ENCODE measurements at regions of chr2 and their contacts with region 1.

Region 1: DNA sequence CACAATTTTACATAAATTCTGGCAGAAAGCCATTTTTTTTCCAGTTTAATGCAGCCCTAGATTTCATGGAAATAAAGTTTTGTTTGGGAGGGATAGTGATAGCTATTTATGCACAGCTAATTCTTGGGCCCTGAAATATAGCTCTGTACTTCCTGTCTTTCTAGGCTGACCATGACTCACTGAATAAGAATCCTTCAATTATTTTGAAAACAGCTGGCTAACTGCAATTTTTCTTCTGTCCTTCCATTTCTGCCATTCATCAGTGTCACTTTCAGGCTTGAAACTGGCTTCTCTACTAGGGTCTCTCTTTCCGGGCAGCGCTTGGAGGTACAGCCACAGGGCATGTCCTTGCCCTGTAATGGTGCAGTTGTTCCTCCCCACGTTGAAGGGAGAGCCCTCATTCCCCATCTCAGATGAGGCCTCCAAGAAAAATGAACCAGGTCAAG is 97.1 kb upstream of the TMEM178A start:
- DNase-seq: no peak
- ATAC-seq: peak; percentile 62

Region 2: DNA sequence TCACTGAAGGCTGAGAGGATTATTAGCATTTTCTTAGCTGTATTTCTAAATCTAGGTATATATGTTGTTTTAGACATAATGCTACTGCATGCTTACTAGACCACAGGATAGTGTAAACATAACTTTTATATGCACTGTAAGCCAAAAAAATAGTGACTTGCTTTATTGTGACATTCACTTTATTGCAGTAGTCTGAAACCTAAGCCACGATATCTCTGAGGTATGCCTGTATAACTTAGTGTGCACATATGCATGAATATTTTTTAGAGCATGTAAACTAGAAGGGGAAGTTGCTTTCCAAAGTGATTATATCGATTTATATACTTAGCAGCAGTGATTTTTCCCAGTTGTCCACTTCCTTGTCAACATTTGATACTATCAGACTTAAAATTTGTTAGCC is 529.5 kb before region 1 on chr2:
- intact Hi-C with region 1: no loop called
- DNase-seq: no peak
- ATAC-seq: no peak

Region 3: GRCh38 chr2:39516347-39517101 is 52.1 kb before region 1 on chr2:
- intact Hi-C with region 1: loop called (anchors 5 kb)
- DNase-seq: no peak
- ATAC-seq: no peak

Measured in sciatic nerve (tissue), 2 donors.